CD4-positive, alpha-beta T cell (primary cell): ENCODE measurements at regions of chr11 and their contacts with region 1.

Region 1: DNA sequence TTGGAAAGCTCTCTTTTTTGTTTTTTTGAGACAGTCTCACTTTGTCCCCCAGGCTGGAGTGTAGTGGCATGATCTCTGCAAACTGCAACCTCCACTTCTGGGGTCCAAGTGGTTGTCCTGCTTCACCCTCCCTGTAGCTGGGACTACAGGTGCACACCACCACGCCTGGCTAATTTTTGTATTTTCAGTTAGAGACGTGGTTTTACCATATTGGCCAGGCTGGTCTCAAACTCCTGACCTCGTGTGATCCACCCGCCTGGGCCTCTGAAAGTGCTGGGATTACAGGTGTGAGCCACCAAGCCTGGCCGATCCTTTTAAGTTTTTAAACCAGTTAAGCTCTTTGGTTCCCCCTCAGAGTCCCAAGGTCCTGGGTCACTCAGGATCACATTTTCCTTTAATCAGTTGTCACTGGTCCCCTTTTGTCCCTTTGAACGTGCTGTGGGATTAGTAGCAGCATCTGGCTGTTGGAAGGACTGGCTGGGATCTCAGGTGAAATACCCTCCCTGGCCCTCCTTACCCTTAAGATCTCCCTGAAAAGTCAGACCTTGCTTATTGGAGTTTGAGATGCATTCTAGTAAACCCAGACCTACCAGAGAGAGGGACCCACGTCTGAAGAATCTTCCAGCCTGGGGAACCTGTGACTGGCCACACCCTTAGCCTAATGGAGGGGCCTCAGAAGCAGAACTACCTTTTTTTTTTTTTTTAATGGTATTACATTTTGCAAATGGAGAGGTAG is 8.1 kb downstream of the MALAT1 start:
- DNase-seq: peak in 10 of 14 experiments; percentile 34 to 70 (median 47)
- ATAC-seq: peak; percentile 31
- H3K4me3 ChIP-seq: peak overlapping the region; percentile 73
- H3K4me3 Mint-ChIP-seq: no peak overlapping the region
- H3K27ac ChIP-seq: peak overlapping the region; percentile 46
- H3K27ac Mint-ChIP-seq: no peak overlapping the region
- H3K4me1 ChIP-seq: peaks cover 56% of the 10 kb centered on the region
- H3K4me1 Mint-ChIP-seq: peaks cover 57% of the 10 kb centered on the region
- H3K27me3 ChIP-seq: no peaks in the 10 kb centered on the region
- H3K27me3 Mint-ChIP-seq: no peaks in the 10 kb centered on the region
- CTCF ChIP-seq: no peak

Region 2: GRCh38 chr11:65261591-65262380 is 245.2 kb before region 1 on chr11 and contains the start of gene POLA2:
- CTCF ChIA-PET with region 1: no interaction called
- POLR2A ChIA-PET with region 1: interaction called, 10 read pairs
- intact Hi-C with region 1: no loop called
- DNase-seq: peak; percentile 90 to 99 (median 96)
- ATAC-seq: peak; percentile 88
- H3K4me3 ChIP-seq: peak within 1 kb of the TSS; percentile 84
- H3K4me3 Mint-ChIP-seq: peak within 1 kb of the TSS; percentile 92
- H3K27ac ChIP-seq: peak within 1 kb of the TSS; percentile 84 to 89
- H3K27ac Mint-ChIP-seq: peak within 1 kb of the TSS; percentile 91
- H3K4me1 ChIP-seq: peaks cover 31% of the 10 kb centered on the region
- H3K4me1 Mint-ChIP-seq: peaks cover 54% of the 10 kb centered on the region
- H3K27me3 ChIP-seq: no peaks in the 10 kb centered on the region
- H3K27me3 Mint-ChIP-seq: no peaks in the 10 kb centered on the region
- CTCF ChIP-seq: no peak
- total RNA-seq, gene POLA2: 9.6 to 10.6 TPM

Region 3: GRCh38 chr11:65366340-65366773 is 140.6 kb before region 1 on chr11:
- CTCF ChIA-PET with region 1: interaction called, 3 read pairs
- POLR2A ChIA-PET with region 1: interaction called, 3 read pairs
- intact Hi-C with region 1: loop called (anchors 1 kb)
- DNase-seq: peak in 4 of 14 experiments; percentile 49 to 78 (median 78)
- ATAC-seq: peak; percentile 85
- H3K4me3 ChIP-seq: no peak overlapping the region
- H3K4me3 Mint-ChIP-seq: no peak overlapping the region
- H3K27ac ChIP-seq: no peak overlapping the region
- H3K27ac Mint-ChIP-seq: no peak overlapping the region
- H3K4me1 ChIP-seq: peaks cover 8% of the 10 kb centered on the region
- H3K4me1 Mint-ChIP-seq: peaks cover 7% of the 10 kb centered on the region
- H3K27me3 ChIP-seq: no peaks in the 10 kb centered on the region
- H3K27me3 Mint-ChIP-seq: no peaks in the 10 kb centered on the region
- CTCF ChIP-seq: peak; percentile 78

Region 4: DNA sequence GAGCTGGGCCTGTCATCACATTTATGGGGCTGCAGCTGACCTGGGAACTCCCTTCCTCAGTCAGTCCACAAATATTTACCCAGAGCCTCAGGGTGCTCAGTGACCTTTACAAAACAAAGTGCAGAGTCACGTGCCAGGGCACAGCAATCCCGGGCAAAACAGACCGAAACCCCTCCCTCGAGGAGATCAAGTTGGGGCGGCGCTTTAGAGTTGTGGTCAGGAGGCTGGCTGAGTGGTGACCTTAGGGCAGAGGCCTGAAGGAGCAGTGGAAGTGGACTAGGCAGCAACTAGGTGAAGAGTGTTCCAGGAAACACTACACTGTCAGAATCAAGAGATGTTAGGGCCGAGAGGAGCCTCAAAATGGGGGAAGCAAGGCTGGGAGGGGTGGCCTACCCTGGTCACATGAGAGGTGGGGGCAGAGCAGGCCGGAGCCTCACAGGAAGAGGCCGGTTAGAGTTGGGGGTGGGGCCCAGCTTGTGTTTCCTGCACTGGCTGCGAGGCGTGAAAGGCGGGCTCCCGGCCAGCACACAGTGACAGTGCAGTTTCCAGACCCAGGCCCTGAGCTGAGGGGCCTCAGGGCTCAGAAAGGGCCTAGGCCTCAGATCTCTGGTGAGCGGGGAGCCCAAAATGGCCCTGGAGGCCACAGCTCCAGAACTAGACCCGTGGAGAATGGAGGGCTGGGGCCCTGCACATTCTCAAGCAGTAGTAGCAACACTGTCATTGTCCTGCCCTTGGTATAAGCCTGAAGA is 88.1 kb before region 1 on chr11:
- CTCF ChIA-PET with region 1: interaction called, 82 read pairs
- POLR2A ChIA-PET with region 1: interaction called, 3,042 read pairs
- intact Hi-C with region 1: loop called (anchors 1 kb)
- DNase-seq: peak in 12 of 14 experiments; percentile 56 to 94 (median 75)
- ATAC-seq: peak; percentile 2
- H3K4me3 ChIP-seq: peak overlapping the region; percentile 86
- H3K4me3 Mint-ChIP-seq: peak overlapping the region; percentile 92
- H3K27ac ChIP-seq: peak overlapping the region; percentile 99
- H3K27ac Mint-ChIP-seq: peak overlapping the region; percentile 96
- H3K4me1 ChIP-seq: peaks cover 74% of the 10 kb centered on the region
- H3K4me1 Mint-ChIP-seq: peaks cover 57% of the 10 kb centered on the region
- H3K27me3 ChIP-seq: no peaks in the 10 kb centered on the region
- H3K27me3 Mint-ChIP-seq: no peaks in the 10 kb centered on the region
- CTCF ChIP-seq: no peak

Region 5: DNA sequence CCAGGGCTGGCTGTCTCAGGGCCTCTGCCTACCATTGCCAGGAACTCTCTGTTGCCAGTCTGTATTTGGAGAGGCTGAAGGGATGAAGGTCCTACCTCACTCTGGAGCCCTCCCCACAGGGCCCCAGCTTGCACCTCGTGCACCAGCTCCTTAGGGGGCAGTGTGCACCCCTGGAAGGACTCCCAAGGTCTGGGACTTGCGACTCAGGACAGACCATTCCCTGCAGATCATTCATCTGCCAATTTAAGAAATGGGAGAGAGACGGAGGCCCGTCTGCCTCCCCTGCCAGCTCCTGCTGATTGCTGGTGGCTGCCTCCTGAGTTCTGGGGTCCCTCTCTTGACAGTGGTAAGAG is 35.6 kb before region 1 on chr11:
- CTCF ChIA-PET with region 1: interaction called, 15 read pairs
- POLR2A ChIA-PET with region 1: interaction called, 968 read pairs
- intact Hi-C with region 1: loop called (anchors 2 to 5 kb)
- DNase-seq: peak in 5 of 14 experiments; percentile 15 to 64 (median 32)
- ATAC-seq: no peak
- H3K4me3 ChIP-seq: peak overlapping the region; percentile 3
- H3K4me3 Mint-ChIP-seq: no peak overlapping the region
- H3K27ac ChIP-seq: peak overlapping the region; percentile 72 to 76
- H3K27ac Mint-ChIP-seq: peak overlapping the region; percentile 92
- H3K4me1 ChIP-seq: peaks cover 26% of the 10 kb centered on the region
- H3K4me1 Mint-ChIP-seq: peaks cover 16% of the 10 kb centered on the region
- H3K27me3 ChIP-seq: no peaks in the 10 kb centered on the region
- H3K27me3 Mint-ChIP-seq: no peaks in the 10 kb centered on the region
- CTCF ChIP-seq: no peak

Region 6: GRCh38 chr11:65487413-65488272 is 19.3 kb before region 1 on chr11:
- CTCF ChIA-PET with region 1: no interaction called
- POLR2A ChIA-PET with region 1: interaction called, 20 read pairs
- intact Hi-C with region 1: no loop called
- DNase-seq: peak in 4 of 14 experiments; percentile 34 to 80 (median 60)
- ATAC-seq: peak; percentile 59
- H3K4me3 ChIP-seq: no peak overlapping the region
- H3K4me3 Mint-ChIP-seq: peak overlapping the region; percentile 34
- H3K27ac ChIP-seq: no peak overlapping the region
- H3K27ac Mint-ChIP-seq: peak overlapping the region; percentile 58
- H3K4me1 ChIP-seq: peaks cover 28% of the 10 kb centered on the region
- H3K4me1 Mint-ChIP-seq: peaks cover 24% of the 10 kb centered on the region
- H3K27me3 ChIP-seq: no peaks in the 10 kb centered on the region
- H3K27me3 Mint-ChIP-seq: no peaks in the 10 kb centered on the region
- CTCF ChIP-seq: no peak

Region 7: GRCh38 chr11:65606876-65607613 is 100.1 kb after region 1 on chr11:
- CTCF ChIA-PET with region 1: no interaction called
- POLR2A ChIA-PET with region 1: no interaction called
- intact Hi-C with region 1: no loop called
- DNase-seq: peak in 1 of 14 experiments; percentile 57
- ATAC-seq: peak; percentile 52
- H3K4me3 ChIP-seq: no peak overlapping the region
- H3K4me3 Mint-ChIP-seq: no peak overlapping the region
- H3K27ac ChIP-seq: no peak overlapping the region
- H3K27ac Mint-ChIP-seq: no peak overlapping the region
- H3K4me1 ChIP-seq: peaks cover 31% of the 10 kb centered on the region
- H3K4me1 Mint-ChIP-seq: peaks cover 25% of the 10 kb centered on the region
- H3K27me3 ChIP-seq: no peaks in the 10 kb centered on the region
- H3K27me3 Mint-ChIP-seq: no peaks in the 10 kb centered on the region
- CTCF ChIP-seq: no peak